Breast epithelium (tissue), 4 donors: ENCODE measurements at regions of chr17 and their contacts with region 1.

Region 1: DNA sequence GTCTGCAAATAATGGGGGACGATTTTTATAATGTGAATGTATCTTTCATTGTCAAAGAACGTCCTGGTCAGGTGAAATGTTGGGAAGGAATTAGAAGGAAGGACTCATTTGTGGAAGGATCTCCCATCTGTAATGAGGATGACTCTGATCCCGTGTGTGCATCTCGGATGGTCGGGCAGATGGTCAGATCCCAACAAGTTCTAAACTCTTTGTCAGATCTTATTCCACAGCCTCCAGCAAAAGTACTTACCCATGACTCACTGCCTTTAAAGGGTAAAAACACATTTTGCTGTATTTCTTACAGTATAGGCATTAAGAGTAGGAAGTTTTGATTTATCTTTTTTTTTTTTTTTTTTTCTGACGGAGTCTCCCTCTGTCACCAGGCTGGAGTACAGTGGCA is 534 bp upstream of the KRTAP4-8 start:
- DNase-seq: no peak
- H3K4me3 ChIP-seq: no peak overlapping the region
- H3K27ac ChIP-seq: no peak overlapping the region
- H3K4me1 ChIP-seq: no peaks in the 10 kb centered on the region
- H3K27me3 ChIP-seq: no peaks in the 10 kb centered on the region
- CTCF ChIP-seq: no peak
- POLR2A ChIP-seq: no peak

Region 2: DNA sequence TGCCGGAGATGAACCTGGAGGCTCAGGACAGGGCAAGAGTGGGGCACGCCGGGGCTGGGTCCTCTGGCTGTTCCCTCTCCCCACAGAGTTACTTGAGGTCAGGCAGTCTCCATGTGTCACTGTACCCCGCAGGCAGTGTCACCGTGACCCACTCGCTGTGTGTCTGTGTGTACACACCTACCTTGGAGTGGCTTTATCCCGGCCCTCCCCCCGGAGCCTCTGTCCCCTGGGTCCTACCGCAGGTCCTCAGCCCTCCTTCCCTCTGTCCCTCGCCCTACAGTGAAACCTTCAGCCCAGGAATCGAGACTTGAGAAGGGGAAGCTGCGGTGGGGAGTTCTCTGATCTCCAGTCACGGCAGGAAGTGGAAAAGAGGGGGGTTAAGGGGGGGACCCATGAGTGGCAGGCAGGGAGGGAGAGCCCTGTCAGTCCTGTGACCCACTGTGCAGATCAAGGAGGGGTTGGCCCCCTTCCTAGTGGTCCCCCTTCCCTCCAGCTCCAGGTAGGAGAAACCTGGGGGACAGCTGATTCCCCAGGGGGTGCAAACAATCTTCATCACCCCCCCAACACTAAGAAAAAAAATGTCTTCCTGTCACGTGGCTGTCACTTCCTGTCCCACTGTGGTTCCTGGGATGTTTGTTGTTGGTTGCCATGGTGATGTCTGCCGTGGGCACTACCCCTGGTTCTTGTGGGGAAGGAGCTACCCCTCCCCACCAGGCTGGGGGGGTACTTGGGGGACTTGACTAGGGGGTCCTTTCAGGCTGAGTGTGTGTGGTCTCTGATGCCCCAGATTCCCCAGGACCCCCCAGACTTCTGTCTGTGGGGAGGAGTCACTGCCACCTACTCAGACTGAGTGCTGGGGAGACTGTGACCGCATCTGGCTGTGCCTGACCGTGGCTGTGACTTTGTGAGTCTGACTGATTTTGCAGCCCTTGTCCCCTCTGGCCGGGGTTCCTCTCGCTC is 775.8 kb before region 1 on chr17:
- intact Hi-C with region 1: no loop called
- DNase-seq: peak; percentile 86 to 88
- H3K4me3 ChIP-seq: peak overlapping the region; percentile 36 to 96 (median 86)
- H3K27ac ChIP-seq: peak overlapping the region; percentile 94 to 97
- H3K4me1 ChIP-seq: peaks cover 50 to 70% of the 10 kb centered on the region in 2 donors
- H3K27me3 ChIP-seq: no peaks in the 10 kb centered on the region
- CTCF ChIP-seq: no peak
- POLR2A ChIP-seq: no peak

Region 3: GRCh38 chr17:40980596-40980995 is 117.9 kb before region 1 on chr17:
- intact Hi-C with region 1: loop called (anchors 5 kb)
- DNase-seq: no peak
- H3K4me3 ChIP-seq: peak overlapping the region in 1 of 3 donors; percentile 33
- H3K27ac ChIP-seq: peak overlapping the region; percentile 22 to 32
- H3K4me1 ChIP-seq: no peaks in the 10 kb centered on the region
- H3K27me3 ChIP-seq: no peaks in the 10 kb centered on the region
- CTCF ChIP-seq: no peak
- POLR2A ChIP-seq: no peak

Region 4: GRCh38 chr17:41058741-41059140 is 39.7 kb before region 1 on chr17:
- intact Hi-C with region 1: loop called (anchors 2 kb)
- DNase-seq: no peak
- H3K4me3 ChIP-seq: no peak overlapping the region
- H3K27ac ChIP-seq: no peak overlapping the region
- H3K4me1 ChIP-seq: no peaks in the 10 kb centered on the region
- H3K27me3 ChIP-seq: no peaks in the 10 kb centered on the region
- CTCF ChIP-seq: no peak
- POLR2A ChIP-seq: no peak

Region 5: DNA sequence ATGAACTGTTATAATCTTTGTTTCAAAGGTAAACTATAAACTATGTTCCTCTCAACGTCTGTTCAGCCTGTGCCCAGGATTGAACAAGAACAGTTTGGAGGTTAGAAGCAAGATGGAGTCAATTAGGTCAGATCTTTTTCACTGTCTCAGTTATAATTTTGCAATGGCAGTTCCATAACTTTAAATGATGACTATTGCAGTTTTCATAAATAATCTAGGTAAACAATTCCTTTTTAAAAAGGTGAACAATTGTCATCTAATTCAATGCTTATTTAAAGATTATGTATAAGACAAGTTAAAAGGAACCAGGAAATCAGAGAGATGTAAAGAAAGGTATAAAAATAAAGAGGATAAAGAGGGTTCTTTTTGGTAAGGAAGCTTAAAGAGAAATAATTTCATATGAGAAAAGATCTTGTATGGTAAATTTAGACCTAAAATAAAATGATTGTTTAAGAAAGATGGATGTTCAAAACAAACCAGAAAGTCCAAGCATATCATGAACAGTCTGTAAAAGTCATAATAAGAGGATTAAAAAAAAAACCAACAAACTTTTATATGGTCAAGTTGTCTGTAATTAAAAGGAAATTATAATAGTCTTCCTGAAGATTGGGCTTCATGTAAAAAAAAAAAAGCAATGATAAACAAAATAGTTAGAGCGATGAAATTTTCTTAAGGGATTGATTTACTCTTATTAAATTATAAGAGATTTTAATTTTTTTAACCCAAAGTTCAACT is 12.8 kb after region 1 on chr17:
- intact Hi-C with region 1: no loop called
- DNase-seq: no peak
- H3K4me3 ChIP-seq: no peak overlapping the region
- H3K27ac ChIP-seq: no peak overlapping the region
- H3K4me1 ChIP-seq: no peaks in the 10 kb centered on the region
- H3K27me3 ChIP-seq: no peaks in the 10 kb centered on the region
- CTCF ChIP-seq: no peak
- POLR2A ChIP-seq: no peak